ENCODE measurements at regions of chr1 and their contacts with region 1.

Region 1: DNA sequence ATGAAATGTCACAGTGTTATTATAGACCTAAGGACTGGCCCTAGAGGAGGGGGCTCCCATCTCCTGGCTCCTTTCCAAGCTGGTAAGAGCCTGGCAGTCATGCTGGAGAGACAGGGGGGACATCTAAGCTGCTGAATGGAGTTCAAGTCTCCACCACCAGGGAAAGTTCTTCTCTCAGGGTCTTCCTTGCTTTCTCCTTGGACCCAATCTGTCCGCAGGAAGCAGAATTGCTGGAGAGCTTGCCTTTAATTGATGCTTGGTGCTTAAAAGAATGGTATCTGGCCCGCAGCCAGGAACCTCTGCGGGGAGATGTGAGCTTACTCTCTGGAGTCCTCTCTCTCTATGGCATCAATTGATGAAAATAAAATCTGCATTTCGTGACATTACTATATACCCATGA is 25.1 kb downstream of the IRF2BP2 start:
- DNase-seq: peak; percentile 89
- H3K4me3 ChIP-seq: no peak overlapping the region
- H3K27ac ChIP-seq: peak overlapping the region; percentile 78 to 87 (median 81)
- H3K4me1 ChIP-seq: peaks cover 38 to 59% (median 57%) of the 10 kb centered on the region in 4 donors
- H3K27me3 ChIP-seq: no peaks in the 10 kb centered on the region
- CTCF ChIP-seq: peak in 1 of 3 experiments; percentile 3
- EP300 ChIP-seq: no peak
- POLR2A ChIP-seq: no peak

Region 2: GRCh38 chr1:234545859-234546561 is 38.9 kb before region 1 on chr1:
- intact Hi-C with region 1: loop called (anchors 5 kb)
- DNase-seq: no peak
- H3K4me3 ChIP-seq: no peak overlapping the region
- H3K27ac ChIP-seq: peak overlapping the region; percentile 92 to 99 (median 96)
- H3K4me1 ChIP-seq: peaks cover 47 to 56% (median 56%) of the 10 kb centered on the region in 4 donors
- H3K27me3 ChIP-seq: no peaks in the 10 kb centered on the region
- CTCF ChIP-seq: no peak
- EP300 ChIP-seq: peak; percentile 66
- POLR2A ChIP-seq: no peak

Measured in esophagus muscularis mucosa (tissue), 4 donors.